Ascending aorta (tissue), 2 donors: ENCODE measurements at regions of chr2 and their contacts with region 1.

Region 1: GRCh38 chr2:131801210-131801744 is 273.6 kb downstream of the CCDC74A start:
- DNase-seq: no peak
- H3K4me3 ChIP-seq: peak overlapping the region; percentile 30 to 61
- H3K27ac ChIP-seq: no peak overlapping the region
- H3K4me1 ChIP-seq: peaks cover 6 to 7% of the 10 kb centered on the region in 2 donors
- H3K27me3 ChIP-seq: peaks cover 3% of the 10 kb centered on the region
- CTCF ChIP-seq: no peak

Region 2: GRCh38 chr2:131641414-131642206 is 159.7 kb before region 1 on chr2:
- intact Hi-C with region 1: no loop called
- DNase-seq: no peak
- H3K4me3 ChIP-seq: no peak overlapping the region
- H3K27ac ChIP-seq: no peak overlapping the region
- H3K4me1 ChIP-seq: no peaks in the 10 kb centered on the region
- H3K27me3 ChIP-seq: no peaks in the 10 kb centered on the region
- CTCF ChIP-seq: no peak

Region 3: DNA sequence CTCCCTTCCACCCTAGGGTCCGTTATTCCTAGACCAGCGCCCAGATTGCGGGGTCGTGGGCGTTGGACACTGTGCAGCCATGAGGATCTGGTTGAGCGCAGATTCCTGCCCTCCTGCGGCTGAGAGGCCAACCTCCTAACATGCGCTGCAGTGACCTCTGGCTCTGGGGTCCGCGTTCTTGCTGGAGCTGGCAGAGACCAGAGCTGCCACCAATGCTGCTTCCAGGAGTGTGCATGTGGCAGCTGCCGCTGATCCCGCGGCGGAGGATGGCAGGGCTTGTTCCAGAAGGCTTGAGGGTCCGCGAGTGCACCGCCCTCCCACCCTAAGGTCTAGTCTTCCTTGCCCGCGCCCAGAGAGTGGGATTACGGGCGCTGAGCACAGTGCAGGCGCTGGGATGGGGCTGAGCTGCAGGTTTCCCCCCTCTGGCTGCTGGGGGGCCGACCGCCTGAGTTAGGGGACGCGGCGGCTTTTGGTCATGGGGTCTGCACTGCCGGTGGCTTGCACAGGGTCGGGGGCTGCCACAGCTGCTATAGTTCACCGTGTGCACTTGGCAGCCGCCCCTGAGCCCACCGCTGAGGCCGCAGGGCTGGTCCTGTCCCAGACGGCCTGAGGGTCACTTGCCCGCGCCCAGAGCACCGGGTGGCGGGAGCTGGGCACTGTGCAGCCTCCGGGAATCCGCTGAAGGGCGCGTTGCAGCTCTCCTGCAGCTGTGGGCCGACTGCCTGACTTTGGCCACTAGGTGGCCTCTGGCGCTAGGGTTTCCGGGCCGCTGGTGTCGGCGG is 127.7 kb before region 1 on chr2:
- intact Hi-C with region 1: loop called (anchors 2 kb)
- DNase-seq: peak in 1 of 2 donors; percentile 87
- H3K4me3 ChIP-seq: peak overlapping the region; percentile 44 to 61
- H3K27ac ChIP-seq: no peak overlapping the region
- H3K4me1 ChIP-seq: peaks cover 0 to 16% of the 10 kb centered on the region in 2 donors
- H3K27me3 ChIP-seq: no peaks in the 10 kb centered on the region
- CTCF ChIP-seq: peak; percentile 80 to 95 (median 89)

Region 4: GRCh38 chr2:132267105-132267497 is 465.8 kb after region 1 on chr2:
- intact Hi-C with region 1: no loop called
- DNase-seq: no peak
- H3K4me3 ChIP-seq: no peak overlapping the region
- H3K27ac ChIP-seq: no peak overlapping the region
- H3K4me1 ChIP-seq: no peaks in the 10 kb centered on the region
- H3K27me3 ChIP-seq: no peaks in the 10 kb centered on the region
- CTCF ChIP-seq: no peak